ENCODE measurements at regions of chrX and their contacts with region 1.

Region 1: GRCh38 chrX:48891402-48892288 is 5.9 kb downstream of the TIMM17B start:
- DNase-seq: peak; percentile 52 to 90 (median 72)
- ATAC-seq: peak; percentile 88
- H3K4me3 ChIP-seq: peak overlapping the region; percentile 60
- H3K4me3 Mint-ChIP-seq: peak overlapping the region; percentile 86
- H3K27ac ChIP-seq: peak overlapping the region in 1 of 2 donors; percentile 29
- H3K27ac Mint-ChIP-seq: peak overlapping the region; percentile 71
- H3K4me1 ChIP-seq: peaks cover 27% of the 10 kb centered on the region
- H3K4me1 Mint-ChIP-seq: peaks cover 26% of the 10 kb centered on the region
- H3K27me3 ChIP-seq: no peaks in the 10 kb centered on the region
- H3K27me3 Mint-ChIP-seq: no peaks in the 10 kb centered on the region
- CTCF ChIP-seq: peak; percentile 40

Region 2: DNA sequence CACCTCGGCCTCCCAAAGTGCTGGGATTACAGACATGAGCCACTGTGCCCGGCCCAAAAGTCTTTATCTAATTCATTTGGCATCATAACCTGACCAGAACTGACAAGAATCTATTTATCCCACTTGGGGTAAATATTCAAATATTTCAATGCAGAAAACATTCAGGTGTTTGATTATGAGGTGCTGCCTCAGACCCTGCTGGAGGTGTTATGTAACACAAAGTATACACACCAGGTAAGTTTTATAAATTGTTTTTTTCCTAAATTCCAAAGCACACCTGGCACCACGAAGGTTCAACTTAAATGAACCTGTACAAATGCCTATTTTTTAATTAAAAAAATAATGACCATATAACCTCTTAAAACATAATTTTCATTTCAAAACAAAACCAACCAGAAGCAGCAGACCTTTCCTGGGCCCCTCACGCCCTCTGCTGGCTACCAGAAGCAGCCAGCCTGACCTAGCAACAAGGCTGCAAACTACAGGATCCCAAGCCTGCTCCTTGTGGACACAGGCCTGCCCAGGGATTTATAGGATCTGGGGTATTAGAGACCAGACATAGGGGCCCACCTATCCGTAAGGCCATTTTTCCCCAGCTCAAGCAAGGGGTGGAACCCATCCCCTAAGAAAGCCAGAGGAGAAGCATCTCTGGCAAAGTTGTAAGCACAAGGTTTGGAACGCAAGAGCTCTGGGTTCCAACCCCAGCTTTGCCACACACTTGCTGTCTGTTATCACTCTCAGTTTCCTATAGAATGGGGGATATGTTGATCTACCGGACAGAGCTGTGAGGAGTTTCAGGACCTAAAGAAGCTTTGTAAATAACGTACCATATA is 54.1 kb after region 1 on chrX:
- CTCF ChIA-PET with region 1: interaction called, 8 read pairs
- POLR2A ChIA-PET with region 1: interaction called, 33 read pairs
- intact Hi-C with region 1: loop called in 1 of 2 experiments (anchors 2 kb)
- DNase-seq: peak; percentile 30 to 75 (median 52)
- ATAC-seq: peak; percentile 67
- H3K4me3 ChIP-seq: no peak overlapping the region
- H3K4me3 Mint-ChIP-seq: no peak overlapping the region
- H3K27ac ChIP-seq: peak overlapping the region in 1 of 2 donors; percentile 22
- H3K27ac Mint-ChIP-seq: peak overlapping the region; percentile 74
- H3K4me1 ChIP-seq: peaks cover 74% of the 10 kb centered on the region
- H3K4me1 Mint-ChIP-seq: peaks cover 49% of the 10 kb centered on the region
- H3K27me3 ChIP-seq: no peaks in the 10 kb centered on the region
- H3K27me3 Mint-ChIP-seq: no peaks in the 10 kb centered on the region
- CTCF ChIP-seq: peak; percentile 71